Heart left ventricle (tissue), 16 donors: ENCODE measurements at regions of chr9 and their contacts with region 1.

Region 1: DNA sequence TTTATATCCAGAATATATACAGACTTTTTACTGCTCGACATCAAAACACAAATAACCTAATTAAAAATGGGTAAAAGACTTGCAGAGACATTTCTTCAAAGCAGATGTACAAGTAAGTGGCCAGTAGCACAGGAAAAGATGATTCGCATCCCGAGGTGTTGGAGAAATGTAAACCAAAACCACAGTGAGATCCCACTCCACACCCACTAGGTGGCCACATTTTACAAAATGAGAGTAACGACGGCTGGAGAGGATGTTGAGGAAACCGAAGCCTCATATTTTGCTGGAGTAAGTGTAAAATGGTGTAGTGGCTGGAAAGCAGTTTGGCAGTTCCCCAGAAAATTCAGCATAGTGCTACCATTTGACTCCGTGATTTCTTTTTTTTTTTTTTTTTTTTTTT is 21.2 kb upstream of the GBGT1 start:
- DNase-seq: peak in 2 of 5 donors; percentile 43 to 49
- ATAC-seq: peak in 3 of 4 donors; percentile 65 to 88 (median 81)
- H3K4me3 ChIP-seq: no peak overlapping the region
- H3K27ac ChIP-seq: no peak overlapping the region
- H3K4me1 ChIP-seq: peaks cover 0 to 12% (median 0%) of the 10 kb centered on the region in 12 donors
- H3K27me3 ChIP-seq: peaks cover 0 to 12% (median 0%) of the 10 kb centered on the region in 9 donors
- CTCF ChIP-seq: peak; percentile 41 to 79 (median 61)
- POLR2A ChIP-seq: no peak

Region 2: GRCh38 chr9:133205996-133206931 is 21.3 kb after region 1 on chr9:
- intact Hi-C with region 1: no loop called
- DNase-seq: no peak
- ATAC-seq: no peak
- H3K4me3 ChIP-seq: no peak overlapping the region
- H3K27ac ChIP-seq: no peak overlapping the region
- H3K4me1 ChIP-seq: no peaks in the 10 kb centered on the region
- H3K27me3 ChIP-seq: peaks cover 0 to 9% (median 0%) of the 10 kb centered on the region in 9 donors
- CTCF ChIP-seq: no peak
- POLR2A ChIP-seq: no peak

Region 3: GRCh38 chr9:133238851-133239532 is 54.0 kb after region 1 on chr9:
- intact Hi-C with region 1: loop called in 4 of 10 experiments (anchors 5 kb)
- DNase-seq: peak; percentile 54 to 82 (median 66)
- ATAC-seq: peak; percentile 43 to 73 (median 65)
- H3K4me3 ChIP-seq: peak overlapping the region in 11 of 12 donors; percentile 18 to 59 (median 45)
- H3K27ac ChIP-seq: peak overlapping the region; percentile 65 to 95 (median 88)
- H3K4me1 ChIP-seq: peaks cover 0 to 30% (median 21%) of the 10 kb centered on the region in 12 donors
- H3K27me3 ChIP-seq: no peaks in the 10 kb centered on the region
- CTCF ChIP-seq: peak; percentile 64 to 87 (median 78)
- POLR2A ChIP-seq: no peak

Region 4: DNA sequence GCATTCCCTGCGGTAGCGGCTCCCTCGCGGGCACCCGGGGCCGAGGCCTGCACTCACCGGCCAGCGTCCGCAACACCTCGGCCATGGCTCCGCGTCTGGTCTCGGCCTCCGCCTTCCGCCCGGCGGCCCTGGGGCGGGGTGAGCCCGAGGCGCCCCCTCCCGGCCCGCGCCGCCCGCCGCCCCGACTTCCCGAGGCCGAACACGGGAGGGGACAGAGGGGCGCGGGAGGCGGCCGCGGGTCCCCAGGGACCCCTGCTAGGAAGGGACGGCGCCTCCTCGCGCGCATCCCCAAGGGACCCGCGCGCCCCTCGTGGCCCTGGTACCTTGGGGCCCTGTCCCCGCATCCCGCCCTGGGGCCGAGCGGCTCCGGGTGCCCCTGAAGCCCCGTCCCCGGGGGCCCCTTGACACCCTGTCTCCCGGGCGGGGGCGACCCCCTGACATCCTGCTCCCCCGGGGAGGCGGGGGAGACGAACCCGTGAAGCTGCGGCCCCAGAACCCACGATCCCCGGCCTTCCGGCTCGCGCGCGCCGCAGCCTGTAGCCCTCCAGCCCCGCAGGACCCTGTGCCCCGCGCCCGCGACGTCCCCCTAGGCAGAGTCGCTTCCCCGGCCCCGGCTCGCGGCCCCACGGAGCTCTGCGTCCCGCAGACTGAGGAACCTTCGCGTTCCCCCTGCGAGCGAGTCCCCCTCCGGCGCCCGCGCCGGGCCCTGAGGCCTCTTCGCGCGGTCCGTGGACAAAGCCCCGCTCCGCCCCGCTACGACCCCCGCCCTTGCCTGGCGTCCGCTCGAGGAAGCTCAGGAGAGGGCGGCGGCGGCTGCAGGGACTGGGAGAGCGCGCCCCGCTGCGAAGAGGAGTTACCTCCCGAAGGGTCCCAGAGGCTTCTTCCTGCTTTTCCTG is 90.4 kb after region 1 on chr9 and contains the start of gene ABO:
- intact Hi-C with region 1: loop called (anchors 1 to 10 kb)
- DNase-seq: peak; percentile 44 to 77 (median 60)
- ATAC-seq: peak in 3 of 4 donors; percentile 79 to 87 (median 80)
- H3K4me3 ChIP-seq: peak within 1 kb of the TSS; percentile 47 to 84 (median 70)
- H3K27ac ChIP-seq: peak within 1 kb of the TSS; percentile 55 to 93 (median 82)
- H3K4me1 ChIP-seq: peaks cover 0 to 21% (median 0%) of the 10 kb centered on the region in 12 donors
- H3K27me3 ChIP-seq: peaks cover 0 to 34% (median 11%) of the 10 kb centered on the region in 9 donors
- CTCF ChIP-seq: peak in 11 of 12 donors; percentile 7 to 65 (median 45)
- POLR2A ChIP-seq: peak in 1 of 2 donors; percentile 19
- total RNA-seq, gene ABO: 0.91 to 3.5 (median 2.1) TPM

Region 5: GRCh38 chr9:133335878-133336811 is 151.2 kb after region 1 on chr9 and contains the start of gene SURF6:
- intact Hi-C with region 1: loop called in 2 of 10 experiments (anchors 2 to 5 kb)
- DNase-seq: peak; percentile 91 to 96 (median 93)
- ATAC-seq: peak; percentile 89 to 97 (median 96)
- H3K4me3 ChIP-seq: peak within 1 kb of the TSS; percentile 68 to 100 (median 82)
- H3K27ac ChIP-seq: peak within 1 kb of the TSS in 11 of 12 donors; percentile 64 to 91 (median 81)
- H3K4me1 ChIP-seq: peaks cover 6 to 45% (median 20%) of the 10 kb centered on the region in 12 donors
- H3K27me3 ChIP-seq: no peaks in the 10 kb centered on the region
- CTCF ChIP-seq: no peak
- POLR2A ChIP-seq: peak in 1 of 2 donors; percentile 76
- total RNA-seq, gene SURF6: 9.2 to 16.0 (median 11.1) TPM

Region 6: GRCh38 chr9:133485361-133486260 is 300.6 kb after region 1 on chr9:
- intact Hi-C with region 1: loop called (anchors 1 to 5 kb)
- DNase-seq: peak in 3 of 5 donors; percentile 21 to 69 (median 22)
- ATAC-seq: peak in 2 of 4 donors; percentile 4 to 11
- H3K4me3 ChIP-seq: no peak overlapping the region
- H3K27ac ChIP-seq: no peak overlapping the region
- H3K4me1 ChIP-seq: peaks cover 0 to 12% (median 2%) of the 10 kb centered on the region in 12 donors
- H3K27me3 ChIP-seq: peaks cover 0 to 4% (median 0%) of the 10 kb centered on the region in 9 donors
- CTCF ChIP-seq: no peak
- POLR2A ChIP-seq: no peak